Breast epithelium (tissue), 4 donors: ENCODE measurements at regions of chr1 and their contacts with region 1.

Region 1: GRCh38 chr1:203038891-203039608 is 12.8 kb downstream of the PPFIA4 start:
- DNase-seq: peak; percentile 54 to 70
- H3K4me3 ChIP-seq: no peak overlapping the region
- H3K27ac ChIP-seq: no peak overlapping the region
- H3K4me1 ChIP-seq: no peaks in the 10 kb centered on the region
- H3K27me3 ChIP-seq: no peaks in the 10 kb centered on the region
- CTCF ChIP-seq: peak; percentile 85 to 89 (median 89)
- POLR2A ChIP-seq: no peak

Region 2: DNA sequence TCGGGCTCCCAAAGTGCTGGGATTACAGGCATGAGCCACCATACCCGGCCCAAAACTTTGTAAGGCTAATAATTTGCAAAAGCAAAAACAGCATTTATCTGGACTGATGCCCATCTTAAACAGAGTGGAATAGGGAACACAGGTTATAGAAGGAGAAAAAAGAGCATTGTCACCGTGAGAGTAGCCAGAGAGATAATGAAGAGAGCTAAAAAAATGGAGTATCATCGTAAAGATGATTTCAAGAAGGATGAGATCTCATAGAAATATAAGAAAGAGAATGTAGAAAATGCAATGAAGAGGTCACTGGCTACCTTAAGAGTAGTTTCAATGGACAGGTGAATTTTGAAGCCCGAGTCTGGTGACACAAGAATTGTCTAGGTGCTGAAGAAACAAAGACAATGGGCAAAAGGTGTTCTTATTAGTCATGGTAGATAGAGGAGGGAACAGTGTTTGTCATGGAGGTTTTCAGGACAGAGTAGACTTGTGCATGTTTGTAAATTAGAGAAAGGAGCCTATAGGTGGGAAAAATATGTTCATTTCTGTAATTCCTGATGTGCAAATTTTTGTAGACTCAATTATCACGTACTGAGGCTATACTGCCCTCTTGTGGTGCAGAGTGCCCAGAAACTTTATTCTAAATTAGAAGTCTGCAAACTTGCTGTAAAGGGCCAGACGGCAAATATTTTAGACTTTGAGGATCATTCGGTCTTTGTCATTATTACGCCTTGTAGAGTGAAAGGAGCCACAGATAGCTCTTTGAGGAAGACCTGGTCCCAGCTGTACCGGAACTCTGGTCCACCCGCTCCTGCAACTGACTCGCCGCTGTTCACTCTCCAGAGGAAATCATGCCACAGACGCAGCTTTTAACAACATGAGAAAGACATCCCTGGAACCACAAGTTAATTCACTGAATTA is 40.0 kb before region 1 on chr1:
- intact Hi-C with region 1: no loop called
- DNase-seq: no peak
- H3K4me3 ChIP-seq: no peak overlapping the region
- H3K27ac ChIP-seq: no peak overlapping the region
- H3K4me1 ChIP-seq: no peaks in the 10 kb centered on the region
- H3K27me3 ChIP-seq: peaks cover 0 to 5% of the 10 kb centered on the region in 2 donors
- CTCF ChIP-seq: peak; percentile 43 to 66 (median 63)
- POLR2A ChIP-seq: no peak

Region 3: DNA sequence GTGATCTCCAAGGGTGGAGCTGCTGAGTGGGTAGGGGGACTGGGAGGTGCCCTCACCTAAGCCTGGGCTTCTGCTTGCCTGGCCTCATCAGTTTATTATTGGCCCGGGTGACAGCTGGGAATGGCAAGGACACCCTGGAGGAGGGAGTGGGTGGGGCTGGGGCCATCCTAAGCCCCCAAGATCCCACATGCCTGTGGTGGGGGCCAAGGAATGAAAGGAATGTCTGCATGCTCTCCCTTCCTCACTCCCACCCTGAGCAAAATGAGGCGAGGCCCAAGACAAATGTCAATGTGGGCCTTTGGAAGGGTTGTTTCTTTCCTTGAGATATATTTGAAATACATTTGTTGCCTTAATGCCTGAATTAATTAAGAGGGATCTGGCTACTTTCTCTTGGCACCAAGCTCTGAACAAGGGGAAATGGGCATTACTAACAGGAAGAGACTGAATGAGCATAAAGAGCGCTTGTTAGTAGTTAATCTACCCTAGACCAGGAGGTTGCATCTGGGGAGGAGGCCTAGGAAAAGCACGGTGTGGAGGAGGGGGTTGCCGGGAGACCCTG is 167.2 kb after region 1 on chr1:
- intact Hi-C with region 1: loop called (anchors 2 kb)
- DNase-seq: no peak
- H3K4me3 ChIP-seq: no peak overlapping the region
- H3K27ac ChIP-seq: peak overlapping the region; percentile 52 to 54
- H3K4me1 ChIP-seq: no peaks in the 10 kb centered on the region
- H3K27me3 ChIP-seq: peaks cover 0 to under 1% of the 10 kb centered on the region in 2 donors
- CTCF ChIP-seq: no peak
- POLR2A ChIP-seq: no peak

Region 4: DNA sequence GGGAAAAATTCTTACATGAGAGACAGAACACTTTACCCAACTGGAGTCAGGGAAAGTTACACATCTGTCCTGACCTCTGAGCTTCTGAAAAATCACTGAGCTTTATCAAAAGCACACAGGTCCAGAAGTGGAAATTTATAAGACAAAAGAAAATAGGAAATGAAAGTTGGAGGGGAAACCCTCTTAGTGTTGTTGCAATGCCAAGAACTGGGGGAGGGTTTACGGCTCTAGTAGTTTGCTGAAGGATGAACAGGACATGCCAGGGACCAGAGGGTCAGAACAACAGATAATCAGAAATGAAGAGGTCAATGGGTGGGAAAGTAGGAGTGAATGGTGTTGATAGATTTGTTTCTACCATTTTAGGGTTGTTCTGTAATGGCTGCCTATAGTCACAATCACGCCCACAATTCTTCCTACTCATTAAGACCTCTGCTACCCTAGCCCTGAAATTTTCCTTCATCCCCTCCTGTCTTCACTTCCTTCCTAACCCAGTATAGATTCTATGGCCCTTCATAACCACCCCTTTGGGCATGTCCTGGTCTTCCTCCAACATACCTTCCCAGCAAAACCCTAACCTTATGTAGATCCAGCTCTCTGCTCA is 342.2 kb after region 1 on chr1:
- intact Hi-C with region 1: no loop called
- DNase-seq: no peak
- H3K4me3 ChIP-seq: no peak overlapping the region
- H3K27ac ChIP-seq: no peak overlapping the region
- H3K4me1 ChIP-seq: no peaks in the 10 kb centered on the region
- H3K27me3 ChIP-seq: no peaks in the 10 kb centered on the region
- CTCF ChIP-seq: no peak
- POLR2A ChIP-seq: no peak